Right cardiac atrium (tissue), 5 donors: ENCODE measurements at regions of chr10 and their contacts with region 1.

Region 1: GRCh38 chr10:22010973-22011408 is 7.5 kb upstream of the DNAJC1 start:
- DNase-seq: no peak
- ATAC-seq: no peak
- H3K4me3 ChIP-seq: no peak overlapping the region
- H3K27ac ChIP-seq: no peak overlapping the region
- H3K4me1 ChIP-seq: no peaks in the 10 kb centered on the region
- H3K27me3 ChIP-seq: no peaks in the 10 kb centered on the region

Region 2: DNA sequence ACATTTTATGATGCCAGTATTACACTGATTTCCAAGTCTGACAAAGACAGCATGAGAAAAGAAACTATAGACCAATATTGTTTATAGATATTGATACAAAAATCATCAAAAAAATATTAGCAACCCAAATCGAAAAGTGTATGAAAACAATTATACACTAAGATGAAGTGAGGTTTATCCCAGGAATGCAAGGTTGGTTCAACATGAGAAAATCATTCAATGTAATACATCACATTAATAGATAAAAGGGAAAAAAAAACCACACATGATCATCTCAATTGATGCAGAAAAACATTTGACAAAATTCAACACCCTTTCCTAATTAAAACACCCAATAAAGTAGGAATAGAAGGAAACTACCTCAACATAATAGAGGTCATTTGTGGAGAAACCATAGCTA is 161.4 kb before region 1 on chr10:
- intact Hi-C with region 1: no loop called
- DNase-seq: no peak
- ATAC-seq: no peak
- H3K4me3 ChIP-seq: no peak overlapping the region
- H3K27ac ChIP-seq: no peak overlapping the region
- H3K4me1 ChIP-seq: no peaks in the 10 kb centered on the region
- H3K27me3 ChIP-seq: no peaks in the 10 kb centered on the region

Region 3: GRCh38 chr10:22097696-22098095 is 86.7 kb after region 1 on chr10:
- intact Hi-C with region 1: no loop called
- DNase-seq: no peak
- ATAC-seq: no peak
- H3K4me3 ChIP-seq: no peak overlapping the region
- H3K27ac ChIP-seq: no peak overlapping the region
- H3K4me1 ChIP-seq: no peaks in the 10 kb centered on the region
- H3K27me3 ChIP-seq: no peaks in the 10 kb centered on the region

Region 4: DNA sequence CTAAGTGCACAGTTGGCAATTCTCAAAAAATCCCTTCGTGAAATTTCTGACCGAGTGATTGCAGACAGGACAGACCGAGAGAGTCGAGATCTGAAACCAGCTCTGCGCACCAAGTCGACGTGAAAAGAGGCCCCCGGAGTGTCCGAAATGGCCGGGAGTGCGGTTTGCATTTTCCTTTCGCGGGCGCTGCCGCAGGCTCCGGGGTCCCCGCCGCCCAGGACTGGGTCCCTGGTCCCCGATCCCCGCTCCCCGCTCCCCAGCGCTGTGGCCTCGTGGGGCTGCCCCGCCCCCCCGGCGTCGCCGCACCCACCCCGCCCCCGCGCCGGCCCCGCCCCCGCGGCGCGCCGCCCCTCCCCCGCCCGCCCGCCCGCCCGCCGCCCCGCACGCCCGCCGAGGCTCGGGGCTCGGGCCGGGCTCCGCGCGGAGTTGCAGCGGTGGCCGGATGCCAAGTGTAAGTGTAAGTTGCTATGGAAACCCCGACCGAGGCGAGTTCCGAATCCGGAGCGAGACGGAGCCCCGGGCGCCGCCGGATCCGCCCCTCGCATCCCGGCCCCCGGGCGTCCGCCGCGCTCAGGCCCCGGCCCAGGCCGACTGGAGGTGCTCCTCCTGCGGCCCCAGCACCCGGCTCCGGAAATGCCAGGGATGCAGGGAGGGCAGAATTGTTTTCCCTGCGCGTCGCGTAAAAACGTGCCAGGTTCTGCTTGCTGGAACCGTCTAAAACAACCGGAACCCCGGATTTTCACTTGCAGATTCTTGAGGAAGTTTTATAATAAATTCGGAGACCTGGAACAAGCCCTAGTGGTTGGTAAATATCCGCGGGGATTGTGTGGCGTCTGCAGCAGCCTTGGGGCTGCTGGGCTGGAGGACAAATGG is 314.5 kb after region 1 on chr10:
- intact Hi-C with region 1: loop called in 2 of 4 experiments (anchors 10 kb)
- DNase-seq: peak; percentile 83 to 91 (median 88)
- ATAC-seq: peak; percentile 64 to 80
- H3K4me3 ChIP-seq: peak overlapping the region; percentile 97
- H3K27ac ChIP-seq: peak overlapping the region; percentile 30
- H3K4me1 ChIP-seq: peaks cover 2% of the 10 kb centered on the region
- H3K27me3 ChIP-seq: no peaks in the 10 kb centered on the region

Region 5: DNA sequence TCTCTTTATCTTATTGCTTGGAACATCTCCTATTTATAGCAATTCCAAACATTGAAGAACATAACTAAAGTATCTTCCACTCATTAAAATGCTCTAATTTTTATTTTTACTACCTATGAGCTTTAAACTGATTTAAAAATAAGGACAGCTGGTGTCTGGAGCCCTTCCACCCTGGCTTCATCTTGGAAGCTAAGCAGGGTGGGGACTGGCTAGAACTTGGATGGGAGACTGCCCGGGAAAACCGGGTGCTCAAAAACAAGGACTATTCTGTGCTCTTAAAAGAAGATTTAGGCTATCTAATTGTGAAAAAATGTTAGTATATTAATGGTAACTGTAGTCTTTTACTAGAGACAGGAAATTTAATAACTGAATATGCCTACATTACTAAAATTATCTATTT is 986.1 kb after region 1 on chr10:
- intact Hi-C with region 1: loop called in 1 of 4 experiments (anchors 10 kb)
- DNase-seq: no peak
- ATAC-seq: no peak
- H3K4me3 ChIP-seq: no peak overlapping the region
- H3K27ac ChIP-seq: no peak overlapping the region
- H3K4me1 ChIP-seq: no peaks in the 10 kb centered on the region
- H3K27me3 ChIP-seq: no peaks in the 10 kb centered on the region